Transverse colon (tissue), 4 donors: ENCODE measurements at regions of chr14 and their contacts with region 1.

Region 1: GRCh38 chr14:64891839-64892375 is 12.2 kb upstream of the SPTB start:
- DNase-seq: peak; percentile 15
- H3K4me3 ChIP-seq: no peak overlapping the region
- H3K27ac ChIP-seq: no peak overlapping the region
- H3K4me1 ChIP-seq: no peaks in the 10 kb centered on the region
- H3K27me3 ChIP-seq: peaks cover 5% of the 10 kb centered on the region
- CTCF ChIP-seq: peak; percentile 41 to 62 (median 52)
- EP300 ChIP-seq: no peak
- POLR2A ChIP-seq: no peak

Region 2: DNA sequence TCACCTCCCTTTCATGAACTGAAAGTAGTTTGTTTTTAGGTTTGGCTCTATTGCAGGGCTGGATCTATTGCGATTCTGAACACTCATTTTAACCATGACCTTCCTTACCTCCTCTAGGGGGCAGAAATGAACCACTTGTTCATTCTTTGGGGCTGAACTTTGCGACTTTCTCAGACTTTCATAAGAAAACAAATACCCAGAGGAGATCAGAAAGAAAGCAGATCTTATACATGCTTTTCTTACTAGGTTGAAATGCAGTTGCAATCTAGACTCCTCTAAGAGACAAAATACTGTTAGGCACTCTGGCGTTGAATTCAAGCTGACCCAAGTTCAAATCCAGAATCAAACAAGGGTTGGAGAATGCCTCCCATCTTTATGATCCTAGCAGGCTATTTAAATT is 220.3 kb before region 1 on chr14:
- in situ Hi-C with region 1: loop called in 1 of 4 experiments (anchors 25 kb)
- intact Hi-C with region 1: no loop called
- DNase-seq: no peak
- H3K4me3 ChIP-seq: no peak overlapping the region
- H3K27ac ChIP-seq: peak overlapping the region in 1 of 4 donors; percentile 25
- H3K4me1 ChIP-seq: peaks cover 3 to 36% (median 20%) of the 10 kb centered on the region in 4 donors
- H3K27me3 ChIP-seq: no peaks in the 10 kb centered on the region
- CTCF ChIP-seq: peak; percentile 61 to 82 (median 68)
- EP300 ChIP-seq: no peak
- POLR2A ChIP-seq: no peak

Region 3: GRCh38 chr14:64823305-64823861 is 68.5 kb before region 1 on chr14:
- in situ Hi-C with region 1: loop called in 2 of 4 experiments (anchors 10 kb)
- intact Hi-C with region 1: no loop called
- DNase-seq: peak; percentile 78
- H3K4me3 ChIP-seq: no peak overlapping the region
- H3K27ac ChIP-seq: no peak overlapping the region
- H3K4me1 ChIP-seq: peaks cover 3 to 4% (median 4%) of the 10 kb centered on the region in 4 donors
- H3K27me3 ChIP-seq: no peaks in the 10 kb centered on the region
- CTCF ChIP-seq: peak; percentile 75 to 85 (median 83)
- EP300 ChIP-seq: no peak
- POLR2A ChIP-seq: no peak